ENCODE measurements at regions of chr12 and their contacts with region 1.

Region 1: GRCh38 chr12:124388679-124389536 is 94.0 kb downstream of the RFLNA start:
- DNase-seq: no peak
- H3K4me3 ChIP-seq: peak overlapping the region; percentile 93
- H3K27me3 ChIP-seq: no peaks in the 10 kb centered on the region
- CTCF ChIP-seq: peak; percentile 5; the same call in 1 of the 2 replicates

Region 2: GRCh38 chr12:124167141-124167540 is 221.8 kb before region 1 on chr12:
- CTCF ChIA-PET with region 1: no interaction called
- POLR2A ChIA-PET with region 1: interaction called, 10 read pairs
- DNase-seq: no peak
- H3K4me3 ChIP-seq: no peak overlapping the region
- H3K27me3 ChIP-seq: no peaks in the 10 kb centered on the region; the same call in 1 of the 2 replicates
- CTCF ChIP-seq: no peak

Region 3: GRCh38 chr12:124399622-124400021 is 10.7 kb after region 1 on chr12:
- CTCF ChIA-PET with region 1: interaction called, 16 read pairs
- POLR2A ChIA-PET with region 1: no interaction called
- DNase-seq: no peak
- H3K4me3 ChIP-seq: no peak overlapping the region
- H3K27me3 ChIP-seq: no peaks in the 10 kb centered on the region
- CTCF ChIP-seq: peak; percentile 75

Region 4: GRCh38 chr12:124497658-124498057 is 108.8 kb after region 1 on chr12:
- CTCF ChIA-PET with region 1: no interaction called
- POLR2A ChIA-PET with region 1: interaction called, 16 read pairs
- DNase-seq: peak; percentile 39
- H3K4me3 ChIP-seq: no peak overlapping the region
- H3K27me3 ChIP-seq: no peaks in the 10 kb centered on the region
- CTCF ChIP-seq: no peak

Measured in BJ (cell line).